HepG2 (cell line): ENCODE measurements at regions of chr1 and their contacts with region 1.

Region 1: GRCh38 chr1:110412576-110412975 is 5.1 kb upstream of the LAMTOR5 start:
- DNase-seq: peak; percentile 69
- ATAC-seq: peak; percentile 89
- H3K4me3 ChIP-seq: no peak overlapping the region
- H3K27ac ChIP-seq: no peak overlapping the region
- H3K4me1 ChIP-seq: peaks cover 13% of the 10 kb centered on the region
- H3K27me3 ChIP-seq: no peaks in the 10 kb centered on the region; a peak in 1 of 5 replicates
- CTCF ChIP-seq: peak; percentile 90
- EP300 ChIP-seq: no peak
- POLR2A ChIP-seq: no peak
- RAD21 ChIP-seq: peak; percentile 71

Region 2: GRCh38 chr1:110460253-110461220 is 48.0 kb after region 1 on chr1:
- CTCF ChIA-PET with region 1: interaction called, 28 read pairs
- POLR2A ChIA-PET with region 1: interaction called, 5 read pairs
- in situ Hi-C with region 1: loop called (anchors 5 kb)
- intact Hi-C with region 1: no loop called
- DNase-seq: peak; percentile 69
- ATAC-seq: peak; percentile 78
- H3K4me3 ChIP-seq: no peak overlapping the region
- H3K27ac ChIP-seq: no peak overlapping the region
- H3K4me1 ChIP-seq: 0 out of 2 replicates have a peak, but pooled peaks cover 7% of the 10 kb centered on the region
- H3K27me3 ChIP-seq: peaks cover 0 to 4% of the 10 kb centered on the region in 2 experiments; a peak in 1 of 5 replicates
- CTCF ChIP-seq: peak; percentile 91
- EP300 ChIP-seq: no peak
- POLR2A ChIP-seq: no peak
- RAD21 ChIP-seq: peak; percentile 84

Region 3: GRCh38 chr1:110495926-110496600 is 83.5 kb after region 1 on chr1:
- CTCF ChIA-PET with region 1: interaction called, 11 read pairs
- POLR2A ChIA-PET with region 1: no interaction called
- in situ Hi-C with region 1: no loop called
- intact Hi-C with region 1: no loop called
- DNase-seq: peak; percentile 56
- ATAC-seq: peak; percentile 94
- H3K4me3 ChIP-seq: no peak overlapping the region
- H3K27ac ChIP-seq: no peak overlapping the region
- H3K4me1 ChIP-seq: no peaks in the 10 kb centered on the region
- H3K27me3 ChIP-seq: no peaks in the 10 kb centered on the region; a peak in 1 of 5 replicates
- CTCF ChIP-seq: peak; percentile 87
- EP300 ChIP-seq: no peak
- POLR2A ChIP-seq: no peak
- RAD21 ChIP-seq: peak; percentile 86